IMR-90 (cell line): ENCODE measurements at regions of chr3 and their contacts with region 1.

Region 1: DNA sequence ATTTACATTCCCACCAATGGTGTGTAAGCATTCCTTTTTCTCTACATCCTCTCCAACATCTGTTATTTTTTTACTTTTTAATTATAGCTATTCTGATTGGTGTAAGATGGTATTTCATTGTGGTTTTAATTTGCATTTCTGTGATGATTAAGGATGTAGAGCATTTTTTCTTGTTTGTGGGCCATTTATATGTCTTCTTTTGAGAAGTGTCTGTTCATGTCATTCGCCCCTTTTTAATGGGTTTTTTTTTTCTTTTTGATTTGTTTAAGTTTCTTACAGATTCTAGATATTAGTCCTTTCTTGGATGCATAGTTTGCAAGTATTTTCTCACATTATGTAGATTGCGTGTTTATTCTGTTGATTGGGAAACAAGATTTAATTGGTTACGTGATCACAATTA is 14.2 kb downstream of the RAP2B start:
- DNase-seq: no peak
- ATAC-seq: no peak
- H3K4me3 ChIP-seq: no peak overlapping the region
- H3K27ac ChIP-seq: no peak overlapping the region
- H3K4me1 ChIP-seq: peaks cover 5% of the 10 kb centered on the region; the same call in 1 of the 2 replicates
- H3K27me3 ChIP-seq: no peaks in the 10 kb centered on the region
- CTCF ChIP-seq: no peak
- POLR2A ChIP-seq: no peak
- RAD21 ChIP-seq: no peak

Region 2: DNA sequence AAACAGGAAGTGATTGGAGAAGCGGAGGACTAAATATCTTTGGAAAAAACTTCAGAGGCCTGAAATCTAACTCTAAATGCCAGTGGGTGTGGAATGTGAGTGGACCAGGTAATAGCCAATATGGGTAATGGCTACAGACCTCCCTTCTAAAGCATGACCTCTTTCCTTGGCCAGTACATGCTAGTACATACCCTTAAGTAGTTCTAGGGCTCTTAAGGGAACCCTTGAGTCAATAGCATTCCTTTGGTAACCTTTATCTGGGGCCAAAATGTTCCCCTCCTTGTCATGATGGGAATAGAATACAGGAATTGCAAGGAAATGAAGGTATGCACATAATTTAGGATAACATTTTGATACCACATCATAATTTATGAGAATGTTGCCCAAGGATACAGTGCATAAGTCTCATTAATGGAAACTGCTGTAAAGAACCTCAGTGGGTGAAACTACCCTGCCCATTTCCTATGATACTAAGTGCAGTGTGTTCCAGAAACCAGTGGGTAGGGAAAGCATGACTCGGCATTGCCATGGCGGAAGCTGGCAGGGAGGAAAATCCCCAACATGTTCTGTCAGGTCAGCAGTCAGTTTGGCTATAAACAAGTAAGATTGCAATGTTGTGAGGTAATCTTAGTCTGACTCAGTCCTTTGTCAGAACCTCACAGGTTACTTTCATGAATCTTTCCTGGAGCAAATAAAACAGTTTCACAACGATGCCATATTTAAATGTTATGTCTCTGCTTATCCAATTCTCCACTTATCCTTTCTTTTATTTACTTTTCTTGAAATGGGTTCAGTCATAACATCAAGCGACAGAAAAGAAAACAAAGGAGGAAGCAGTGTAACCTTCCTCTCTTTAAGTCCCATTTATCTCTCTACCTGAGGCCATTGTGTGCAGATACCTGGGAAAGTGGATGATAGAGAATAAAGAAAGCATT is 37.7 kb before region 1 on chr3:
- CTCF ChIA-PET with region 1: no interaction called
- POLR2A ChIA-PET with region 1: no interaction called
- dilution Hi-C with region 1: no loop called
- in situ Hi-C with region 1: no loop called
- intact Hi-C with region 1: loop called (anchors 1 kb)
- DNase-seq: peak; percentile 96
- ATAC-seq: peak; percentile 64
- H3K4me3 ChIP-seq: no peak overlapping the region
- H3K27ac ChIP-seq: peak overlapping the region; percentile 64; the same call in 1 of the 2 replicates
- H3K4me1 ChIP-seq: peaks cover 3% of the 10 kb centered on the region
- H3K27me3 ChIP-seq: no peaks in the 10 kb centered on the region
- CTCF ChIP-seq: no peak
- POLR2A ChIP-seq: no peak; the same call in 1 of the 2 replicates
- RAD21 ChIP-seq: 0 out of 2 replicates have a peak, but pooled peaks have one; percentile 8